CD14-positive monocyte (primary cell): ENCODE measurements at regions of chr1 and their contacts with region 1.

Region 1: GRCh38 chr1:244451951-244452795 is 464 bp upstream of the ADSS2 start:
- DNase-seq: peak; percentile 98 to 99 (median 99)
- H3K4me3 ChIP-seq: peak overlapping the region; percentile 8 to 94 (median 89)
- H3K4me3 Mint-ChIP-seq: peak overlapping the region; percentile 88 to 91
- H3K27ac ChIP-seq: peak overlapping the region; percentile 92 to 93
- H3K27ac Mint-ChIP-seq: peak overlapping the region in 6 of 7 donors; percentile 58 to 87 (median 76)
- H3K4me1 ChIP-seq: peaks cover 27 to 39% of the 10 kb centered on the region in 2 donors
- H3K4me1 Mint-ChIP-seq: peaks cover 36% of the 10 kb centered on the region
- H3K27me3 ChIP-seq: no peaks in the 10 kb centered on the region
- H3K27me3 Mint-ChIP-seq: no peaks in the 10 kb centered on the region
- CTCF ChIP-seq: peak; percentile 43

Region 2: DNA sequence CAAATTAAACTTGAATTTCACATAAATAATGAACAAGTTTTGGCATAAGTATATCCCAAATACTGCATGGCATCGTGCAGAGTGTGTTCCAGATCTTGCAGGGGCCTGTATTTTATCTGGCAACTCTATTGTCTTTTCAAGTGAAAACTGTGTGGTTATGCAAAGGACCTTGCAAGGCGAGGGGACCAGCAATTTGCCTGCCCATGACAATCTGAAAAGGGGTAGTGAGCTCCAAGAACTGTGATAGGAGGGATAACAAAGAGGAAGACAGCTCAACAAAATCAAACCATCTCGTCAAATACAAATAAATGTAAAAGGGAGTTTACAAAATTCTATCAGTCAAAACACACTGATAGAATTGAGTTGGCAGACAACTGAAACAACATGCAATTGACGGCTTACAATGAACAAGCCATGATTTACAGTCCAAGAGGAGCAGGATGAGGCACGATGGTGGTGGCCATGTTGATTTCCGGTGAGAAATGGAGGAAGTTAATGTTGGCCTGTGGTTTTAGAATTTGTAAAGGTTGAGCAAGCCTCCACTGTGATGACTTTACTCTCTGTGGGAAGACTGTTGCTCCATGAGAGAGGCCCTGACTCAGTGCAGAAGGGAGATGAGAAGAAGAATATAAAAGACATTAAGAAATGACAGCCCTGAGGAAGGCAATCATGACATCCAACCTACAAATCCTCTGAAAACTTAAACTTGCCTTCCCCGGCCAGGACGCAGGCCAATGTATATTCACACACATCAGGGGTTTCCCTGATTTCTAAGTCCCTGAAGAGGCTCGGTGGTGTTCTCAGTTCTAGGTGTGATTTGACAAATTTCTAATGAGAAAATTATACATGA is 132.7 kb before region 1 on chr1:
- intact Hi-C with region 1: loop called (anchors 2 to 10 kb)
- DNase-seq: peak; percentile 94 to 98 (median 97)
- H3K4me3 ChIP-seq: peak overlapping the region in 2 of 3 experiments; percentile 26 to 43
- H3K4me3 Mint-ChIP-seq: peak overlapping the region; percentile 51 to 81
- H3K27ac ChIP-seq: peak overlapping the region; percentile 97 to 99
- H3K27ac Mint-ChIP-seq: peak overlapping the region; percentile 96 to 100 (median 99)
- H3K4me1 ChIP-seq: peaks cover 64 to 67% of the 10 kb centered on the region in 2 donors
- H3K4me1 Mint-ChIP-seq: peaks cover 66% of the 10 kb centered on the region
- H3K27me3 ChIP-seq: no peaks in the 10 kb centered on the region
- H3K27me3 Mint-ChIP-seq: no peaks in the 10 kb centered on the region
- CTCF ChIP-seq: no peak

Region 3: GRCh38 chr1:244652699-244653466 is 200.7 kb after region 1 on chr1 and contains the start of gene DESI2:
- intact Hi-C with region 1: loop called (anchors 2 kb)
- DNase-seq: peak; percentile 99 to 100 (median 99)
- H3K4me3 ChIP-seq: peak within 1 kb of the TSS; percentile 69 to 89 (median 80)
- H3K4me3 Mint-ChIP-seq: peak within 1 kb of the TSS; percentile 76 to 93
- H3K27ac ChIP-seq: peak within 1 kb of the TSS; percentile 66 to 89
- H3K27ac Mint-ChIP-seq: peak within 1 kb of the TSS; percentile 72 to 91 (median 82)
- H3K4me1 ChIP-seq: peaks cover 22 to 24% of the 10 kb centered on the region in 2 donors
- H3K4me1 Mint-ChIP-seq: peaks cover 17% of the 10 kb centered on the region
- H3K27me3 ChIP-seq: no peaks in the 10 kb centered on the region
- H3K27me3 Mint-ChIP-seq: peaks cover 0 to 4% (median under 1%) of the 10 kb centered on the region in 3 donors
- CTCF ChIP-seq: peak; percentile 68
- polyA plus RNA-seq, gene DESI2: 10.5 to 12.0 (median 11.2) TPM